Left cardiac atrium (tissue), 4 donors: ENCODE measurements at regions of chr3 and their contacts with region 1.

Region 1: DNA sequence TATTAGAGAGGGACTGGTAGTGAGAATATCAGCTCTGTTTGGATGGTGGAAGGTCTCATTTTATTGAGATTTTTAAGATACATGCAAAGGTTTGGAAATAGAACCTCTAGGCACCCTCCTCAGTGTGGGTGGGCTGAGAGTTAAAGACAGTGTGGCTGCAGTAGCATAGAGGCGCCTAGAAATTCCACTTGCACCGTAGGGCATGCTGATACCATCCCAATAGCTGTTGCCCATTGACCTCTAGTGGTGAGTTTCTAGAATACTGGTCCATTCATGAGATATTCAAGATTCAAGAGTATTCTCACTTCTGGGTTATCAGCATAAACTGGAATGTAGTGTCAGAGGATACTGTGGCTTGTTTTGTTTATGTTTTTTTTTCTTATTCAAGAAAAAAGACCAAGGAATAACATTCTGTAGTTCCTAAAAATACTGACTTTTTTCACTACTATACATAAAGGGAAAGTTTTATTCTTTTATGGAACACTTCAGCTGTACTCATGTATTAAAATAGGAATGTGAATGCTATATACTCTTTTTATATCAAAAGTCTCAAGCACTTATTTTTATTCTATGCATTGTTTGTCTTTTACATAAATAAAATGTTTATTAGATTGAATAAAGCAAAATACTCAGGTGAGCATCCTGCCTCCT is 87.2 kb downstream of the TGFBR2 start:
- DNase-seq: no peak
- ATAC-seq: peak; percentile 80 to 83

Region 2: GRCh38 chr3:30042274-30042859 is 651.2 kb before region 1 on chr3:
- intact Hi-C with region 1: loop called in 1 of 2 experiments (anchors 5 kb)
- DNase-seq: peak; percentile 63
- ATAC-seq: peak; percentile 70 to 75

Region 3: GRCh38 chr3:30112902-30113484 is 580.6 kb before region 1 on chr3:
- intact Hi-C with region 1: loop called in 1 of 2 experiments (anchors 5 kb)
- DNase-seq: no peak
- ATAC-seq: peak; percentile 44 to 59

Region 4: DNA sequence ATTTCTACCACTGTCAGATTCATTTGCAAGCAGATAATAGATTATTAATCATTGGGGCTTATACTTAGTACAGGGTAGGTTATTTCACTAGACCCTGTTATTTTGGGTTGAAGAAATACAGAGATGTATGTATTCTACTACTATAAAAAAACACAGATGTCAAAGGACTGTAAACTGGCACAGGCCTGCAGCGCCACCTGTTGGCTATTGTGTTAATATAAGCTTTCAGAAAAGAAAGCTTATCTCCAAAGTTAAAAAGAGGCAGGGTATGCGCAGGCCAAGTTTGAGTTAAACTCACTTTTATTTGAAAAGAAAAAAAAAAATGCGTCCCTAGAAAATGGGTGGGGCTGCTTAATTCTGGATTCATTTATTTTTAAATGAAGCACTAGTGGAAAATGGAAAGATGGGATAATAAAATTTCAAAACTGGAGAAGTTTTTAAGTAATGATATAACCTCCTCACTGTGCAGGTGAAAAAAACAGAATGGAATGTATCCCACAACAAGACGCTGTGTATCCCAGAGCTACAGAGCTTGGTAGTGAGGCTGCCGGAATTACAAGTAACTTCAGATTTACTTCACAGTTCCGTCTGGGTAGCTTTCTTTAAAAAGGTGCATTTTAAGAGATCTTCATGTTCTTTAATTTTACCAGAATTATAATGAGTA is 494.4 kb before region 1 on chr3:
- intact Hi-C with region 1: loop called in 1 of 2 experiments (anchors 5 kb)
- DNase-seq: peak; percentile 77
- ATAC-seq: peak; percentile 55 to 77

Region 5: GRCh38 chr3:30319713-30320112 is 373.9 kb before region 1 on chr3:
- intact Hi-C with region 1: loop called (anchors 5 to 10 kb)
- DNase-seq: peak; percentile 56
- ATAC-seq: peak; percentile 96 to 97

Region 6: GRCh38 chr3:30453360-30454039 is 240.1 kb before region 1 on chr3:
- intact Hi-C with region 1: loop called in 1 of 2 experiments (anchors 10 kb)
- DNase-seq: no peak
- ATAC-seq: peak; percentile 31 to 64

Region 7: DNA sequence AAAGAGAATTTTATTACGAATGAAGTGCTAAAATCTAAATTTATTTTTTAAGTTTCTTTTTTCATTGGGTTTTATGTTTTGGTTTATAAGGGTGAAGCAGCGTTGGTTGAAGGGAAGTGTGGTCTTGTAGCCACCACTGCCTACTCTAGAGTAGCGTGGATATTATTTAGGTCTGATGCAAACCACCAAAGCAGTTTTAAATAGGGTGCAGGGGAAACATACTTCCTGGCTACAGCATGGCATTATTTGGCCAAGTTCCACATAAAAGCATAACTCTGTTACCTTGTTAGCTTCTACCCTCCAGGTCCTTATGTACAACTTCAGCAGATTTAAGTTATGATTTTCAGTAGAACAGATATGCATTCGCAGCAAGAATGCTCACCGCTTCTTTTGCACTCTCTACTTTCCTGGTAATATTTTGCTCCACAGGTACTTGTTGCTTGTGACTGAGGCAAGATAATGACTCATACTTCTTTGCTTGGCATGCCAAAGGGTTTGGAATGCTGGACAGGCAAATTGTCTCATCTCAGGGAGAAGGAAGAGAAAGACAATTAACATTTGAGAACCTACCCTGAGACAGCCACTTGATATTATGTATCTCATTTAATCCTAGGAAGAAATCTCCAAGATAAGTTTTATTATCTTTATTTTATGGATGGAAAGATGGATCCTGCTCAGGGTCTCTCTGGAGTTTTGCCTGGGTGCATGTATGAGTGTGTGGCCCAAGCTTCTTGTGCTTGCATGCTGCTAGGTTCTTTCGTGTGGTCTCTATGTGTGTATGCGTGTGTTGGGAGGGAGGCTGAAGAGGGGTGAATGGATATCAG is 81.8 kb before region 1 on chr3:
- intact Hi-C with region 1: loop called in 1 of 2 experiments (anchors 5 kb)
- DNase-seq: no peak
- ATAC-seq: peak in 1 of 2 donors; percentile 39

Region 8: GRCh38 chr3:31050296-31050695 is 356.7 kb after region 1 on chr3:
- intact Hi-C with region 1: no loop called
- DNase-seq: no peak
- ATAC-seq: no peak